Astrocyte of the cerebellum (primary cell): ENCODE measurements at regions of chr11 and their contacts with region 1.

Region 1: GRCh38 chr11:69321877-69322361 is 28.0 kb downstream of the MYEOV start:
- DNase-seq: peak; percentile 64
- H3K4me3 ChIP-seq: no peak overlapping the region
- CTCF ChIP-seq: no peak

Region 2: GRCh38 chr11:69368119-69368881 is 46.4 kb after region 1 on chr11:
- in situ Hi-C with region 1: loop called (anchors 5 kb)
- DNase-seq: no peak
- H3K4me3 ChIP-seq: no peak overlapping the region
- CTCF ChIP-seq: no peak